Dendritic cell treated with granulocyte-macrophage colony-stimulating factor and Interleukin-4, amounts not matched to agents 40 ng/mL and 50 ng/mL, for 4 days (primary cell): ENCODE measurements at regions of chr5 and their contacts with region 1.

Region 1: GRCh38 chr5:135876146-135876545 is 19.5 kb downstream of the IL9 start:
- H3K4me3 Mint-ChIP-seq: no peak overlapping the region
- H3K27ac Mint-ChIP-seq: peak overlapping the region; percentile 92
- H3K4me1 Mint-ChIP-seq: peaks cover 92% of the 10 kb centered on the region
- H3K27me3 Mint-ChIP-seq: peaks cover 33% of the 10 kb centered on the region

Region 2: GRCh38 chr5:135861641-135862040 is 14.5 kb before region 1 on chr5:
- intact Hi-C with region 1: loop called (anchors 1 kb)
- H3K4me3 Mint-ChIP-seq: no peak overlapping the region
- H3K27ac Mint-ChIP-seq: peak overlapping the region; percentile 85
- H3K4me1 Mint-ChIP-seq: peaks cover 86% of the 10 kb centered on the region
- H3K27me3 Mint-ChIP-seq: no peaks in the 10 kb centered on the region